ENCODE measurements at regions of chr17 and their contacts with region 1.

Region 1: DNA sequence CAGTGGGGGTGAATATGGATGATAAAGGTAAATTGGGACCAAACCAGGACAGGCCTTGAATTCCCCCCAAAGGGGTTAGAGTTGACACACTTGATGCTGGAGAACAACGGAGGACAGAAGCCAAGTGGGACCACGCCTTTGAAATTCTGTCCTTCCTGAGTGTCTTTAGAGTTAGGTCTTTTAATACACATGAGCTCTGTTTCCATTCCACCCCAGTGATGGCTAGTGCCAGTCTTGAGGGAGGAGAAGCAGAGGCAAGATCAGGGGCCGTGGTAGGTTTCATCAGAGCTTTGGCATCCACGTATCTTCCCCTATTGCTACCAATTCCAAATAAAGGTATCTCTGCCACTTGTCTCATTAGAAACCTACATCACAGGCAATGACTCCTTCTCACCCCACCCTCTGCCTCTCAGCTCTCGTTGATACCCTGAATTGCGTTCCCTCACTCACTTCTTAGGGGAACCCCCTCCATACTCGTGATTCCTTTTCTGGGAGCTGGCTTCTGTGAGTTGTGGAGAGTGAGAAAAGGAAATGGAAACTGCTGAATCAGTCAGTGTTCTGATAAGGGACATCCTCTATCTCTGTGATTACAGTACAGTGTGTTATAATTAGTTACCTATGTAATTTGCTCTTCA is 2.4 kb upstream of the CCL3L1 start:
- DNase-seq: peak in 1 of 5 donors; percentile 69
- H3K4me3 ChIP-seq: no peak overlapping the region
- H3K4me3 Mint-ChIP-seq: peak overlapping the region; percentile 35 to 67 (median 61)
- H3K27ac ChIP-seq: peak overlapping the region; percentile 47
- H3K27ac Mint-ChIP-seq: peak overlapping the region; percentile 81 to 93 (median 89)
- H3K4me1 ChIP-seq: peaks cover 39% of the 10 kb centered on the region
- H3K4me1 Mint-ChIP-seq: peaks cover 69 to 98% (median 96%) of the 10 kb centered on the region in 3 donors
- H3K27me3 ChIP-seq: no peaks in the 10 kb centered on the region
- H3K27me3 Mint-ChIP-seq: peaks cover 0 to 3% of the 10 kb centered on the region in 2 donors

Region 2: DNA sequence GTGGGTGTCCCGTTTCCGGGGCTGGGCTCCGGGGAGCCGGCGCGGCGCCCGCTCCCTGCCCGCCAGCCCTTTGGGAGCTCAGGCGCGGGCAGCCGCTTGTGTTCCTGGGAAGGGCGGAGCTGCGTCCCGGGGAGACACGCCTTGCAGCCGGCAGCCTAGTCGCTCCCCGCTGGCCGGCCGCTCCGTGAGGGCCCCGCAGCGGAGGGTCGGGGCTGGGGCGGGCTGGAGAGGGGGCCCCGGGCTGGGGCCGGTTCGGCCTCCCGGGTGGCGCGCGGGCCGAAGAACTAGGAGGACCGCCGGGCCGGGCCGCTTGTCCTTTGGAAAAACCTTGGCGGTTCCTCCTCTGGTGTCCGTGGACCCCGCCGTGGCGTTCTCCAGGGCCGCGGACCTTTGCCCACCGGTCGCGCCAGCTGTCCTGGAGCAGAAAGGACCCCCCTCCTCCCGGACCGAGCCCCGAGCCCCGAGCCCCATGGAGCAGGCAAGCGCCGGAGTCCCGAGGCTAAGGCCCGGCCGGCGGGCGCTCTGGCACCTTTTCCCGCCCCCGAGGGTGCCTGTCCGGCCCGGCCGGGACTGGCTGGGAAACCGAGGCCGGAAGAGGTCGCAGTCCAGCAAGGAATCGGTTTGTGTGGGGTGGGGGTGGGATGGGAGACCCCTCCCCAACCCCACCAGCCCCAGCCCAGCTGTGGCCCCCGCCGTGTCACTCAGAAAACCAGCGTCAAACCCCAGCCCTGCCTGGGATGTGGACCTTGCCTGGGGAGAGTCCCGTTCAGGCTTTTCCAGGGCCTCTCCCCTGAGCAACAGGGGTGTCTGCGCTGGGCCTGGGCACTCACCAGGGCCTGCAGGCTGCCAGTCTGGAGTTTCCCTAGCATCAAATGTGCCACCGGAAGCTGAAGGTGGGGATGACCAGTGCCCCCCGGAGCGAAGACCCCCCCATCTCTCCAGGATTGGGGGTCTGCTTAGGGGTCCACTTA is 15.7 kb before region 1 on chr17:
- CTCF ChIA-PET with region 1: interaction called, 9 read pairs
- POLR2A ChIA-PET with region 1: interaction called, 130 read pairs
- DNase-seq: peak in 1 of 5 donors; percentile 67
- H3K4me3 ChIP-seq: peak overlapping the region; percentile 45
- H3K4me3 Mint-ChIP-seq: peak overlapping the region; percentile 80 to 99 (median 95)
- H3K27ac ChIP-seq: peak overlapping the region; percentile 69
- H3K27ac Mint-ChIP-seq: peak overlapping the region; percentile 70 to 100 (median 88)
- H3K4me1 ChIP-seq: peaks cover 10% of the 10 kb centered on the region
- H3K4me1 Mint-ChIP-seq: peaks cover 23 to 53% (median 51%) of the 10 kb centered on the region in 3 donors
- H3K27me3 ChIP-seq: no peaks in the 10 kb centered on the region
- H3K27me3 Mint-ChIP-seq: peaks cover 0 to 34% of the 10 kb centered on the region in 2 donors

Measured in CD8-positive, alpha-beta memory T cell (primary cell).